ENCODE measurements at regions of chr22 and their contacts with region 1.

Region 1: GRCh38 chr22:31790240-31790639 is 36.4 kb downstream of the DEPDC5 start:
- DNase-seq: no peak
- ATAC-seq: no peak
- H3K4me3 Mint-ChIP-seq: no peak overlapping the region
- H3K27ac Mint-ChIP-seq: 0 out of 2 replicates have a peak overlapping the region, but pooled peaks have one; percentile 45
- H3K4me1 Mint-ChIP-seq: no peaks in the 10 kb centered on the region
- H3K27me3 Mint-ChIP-seq: no peaks in the 10 kb centered on the region
- CTCF ChIP-seq: no peak

Region 2: DNA sequence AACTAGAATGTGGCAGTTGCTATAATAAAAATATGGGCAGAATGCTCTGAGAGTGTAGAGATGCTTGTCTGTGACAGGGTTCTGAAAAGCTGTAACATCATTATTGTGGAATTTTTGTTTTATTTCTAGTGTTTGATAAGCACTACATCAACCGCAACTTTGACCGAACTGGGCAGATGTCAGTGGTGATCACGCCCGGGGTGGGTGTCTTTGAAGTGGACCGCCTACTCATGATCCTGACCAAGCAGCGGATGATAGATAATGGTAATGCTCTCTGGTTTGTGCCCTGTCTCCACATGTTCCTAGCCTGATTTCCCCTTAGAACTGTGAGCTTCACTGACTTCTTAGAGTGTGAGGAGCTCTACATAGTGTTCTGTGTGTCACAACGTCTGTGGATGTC is 12.3 kb after region 1 on chr22:
- CTCF ChIA-PET with region 1: no interaction called
- POLR2A ChIA-PET with region 1: interaction called, 12 read pairs
- DNase-seq: no peak
- ATAC-seq: no peak
- H3K4me3 Mint-ChIP-seq: no peak overlapping the region
- H3K27ac Mint-ChIP-seq: no peak overlapping the region
- H3K4me1 Mint-ChIP-seq: no peaks in the 10 kb centered on the region
- H3K27me3 Mint-ChIP-seq: no peaks in the 10 kb centered on the region
- CTCF ChIP-seq: no peak